T-cell (primary cell): ENCODE measurements at regions of chr1 and their contacts with region 1.

Region 1: DNA sequence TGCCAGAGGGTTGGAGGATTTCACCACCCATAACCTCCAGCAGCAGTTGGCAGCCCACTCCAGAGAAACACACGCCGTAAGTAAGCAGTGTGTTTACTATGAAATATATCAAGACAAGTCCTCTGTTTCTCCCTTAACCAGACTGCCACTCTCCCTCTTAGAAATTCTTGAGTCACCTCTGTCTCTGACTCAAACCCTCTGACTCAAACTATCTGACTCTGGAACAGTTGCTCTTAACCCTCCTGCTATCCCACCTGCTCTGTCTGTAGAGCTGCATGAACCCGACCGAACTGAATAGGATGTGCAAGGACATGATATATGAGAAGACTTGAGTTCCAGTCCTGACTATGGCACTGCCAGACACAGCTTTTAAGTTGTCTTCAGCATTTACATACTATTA is 14.1 kb downstream of the INPP5B start:
- DNase-seq: no peak
- ATAC-seq: no peak
- H3K4me3 ChIP-seq: no peak overlapping the region
- H3K4me3 Mint-ChIP-seq: peak overlapping the region; percentile 60 to 97 (median 95)
- H3K27ac ChIP-seq: no peak overlapping the region
- H3K27ac Mint-ChIP-seq: peak overlapping the region in 1 of 2 donors; percentile 49
- H3K4me1 ChIP-seq: peaks cover 6 to 26% of the 10 kb centered on the region in 2 experiments
- H3K4me1 Mint-ChIP-seq: peaks cover 31 to 35% (median 35%) of the 10 kb centered on the region in 3 donors
- H3K27me3 ChIP-seq: no peaks in the 10 kb centered on the region
- H3K27me3 Mint-ChIP-seq: no peaks in the 10 kb centered on the region

Region 2: GRCh38 chr1:37883671-37884070 is 49.1 kb before region 1 on chr1:
- CTCF ChIA-PET with region 1: no interaction called
- POLR2A ChIA-PET with region 1: no interaction called
- DNase-seq: no peak
- ATAC-seq: no peak
- H3K4me3 ChIP-seq: peak overlapping the region in 1 of 2 donors; percentile 11
- H3K4me3 Mint-ChIP-seq: peak overlapping the region in 2 of 3 donors; percentile 66 to 75
- H3K27ac ChIP-seq: peak overlapping the region; percentile 44
- H3K27ac Mint-ChIP-seq: peak overlapping the region; percentile 95
- H3K4me1 ChIP-seq: no peaks in the 10 kb centered on the region
- H3K4me1 Mint-ChIP-seq: peaks cover 0 to 29% (median 16%) of the 10 kb centered on the region in 3 donors
- H3K27me3 ChIP-seq: no peaks in the 10 kb centered on the region
- H3K27me3 Mint-ChIP-seq: no peaks in the 10 kb centered on the region

Region 3: GRCh38 chr1:38018864-38019343 is 86.1 kb after region 1 on chr1:
- CTCF ChIA-PET with region 1: no interaction called
- POLR2A ChIA-PET with region 1: interaction called in 1 of 2 experiments, 16 read pairs
- DNase-seq: peak in 1 of 35 experiments; percentile 47
- ATAC-seq: peak in 3 of 4 experiments; percentile 49 to 63 (median 51)
- H3K4me3 ChIP-seq: no peak overlapping the region
- H3K4me3 Mint-ChIP-seq: no peak overlapping the region
- H3K27ac ChIP-seq: no peak overlapping the region
- H3K27ac Mint-ChIP-seq: peak overlapping the region in 1 of 2 donors; percentile 21
- H3K4me1 ChIP-seq: peaks cover 5 to 7% of the 10 kb centered on the region in 2 experiments
- H3K4me1 Mint-ChIP-seq: peaks cover 19 to 24% (median 22%) of the 10 kb centered on the region in 3 donors
- H3K27me3 ChIP-seq: no peaks in the 10 kb centered on the region
- H3K27me3 Mint-ChIP-seq: no peaks in the 10 kb centered on the region